ENCODE measurements at regions of chr12 and their contacts with region 1.

Region 1: GRCh38 chr12:50986966-50987737 is 34.8 kb downstream of the HIGD1C start:
- DNase-seq: no peak

Region 2: GRCh38 chr12:50763639-50764285 is 223.4 kb before region 1 on chr12 and contains the start of gene ATF1:
- intact Hi-C with region 1: loop called (anchors 2 kb)
- DNase-seq: peak; percentile 96
- total RNA-seq, gene ATF1: 26.4 TPM

Region 3: DNA sequence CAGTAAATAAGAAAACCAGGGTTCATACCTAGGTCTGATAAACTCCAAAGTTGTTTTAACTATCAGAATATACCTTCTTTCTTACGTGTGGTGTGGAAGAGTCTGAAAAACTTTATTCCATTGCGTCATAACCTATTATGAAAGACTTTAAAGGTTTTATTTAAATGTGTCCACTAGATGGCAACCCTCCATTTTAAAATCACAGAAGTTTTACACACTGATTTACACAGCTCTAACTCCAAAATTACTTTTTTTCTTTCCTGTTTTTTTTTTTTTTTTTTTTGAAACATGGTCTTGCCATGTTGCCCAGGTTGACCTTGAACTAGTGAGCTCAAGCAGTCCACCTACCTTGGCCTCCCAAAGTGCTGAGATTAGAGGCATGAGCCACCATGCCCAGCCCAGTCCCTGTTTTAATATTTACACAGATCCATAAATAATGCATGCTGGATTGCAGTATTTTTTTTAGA is 161.7 kb before region 1 on chr12:
- intact Hi-C with region 1: loop called (anchors 2 kb)
- DNase-seq: no peak

Region 4: DNA sequence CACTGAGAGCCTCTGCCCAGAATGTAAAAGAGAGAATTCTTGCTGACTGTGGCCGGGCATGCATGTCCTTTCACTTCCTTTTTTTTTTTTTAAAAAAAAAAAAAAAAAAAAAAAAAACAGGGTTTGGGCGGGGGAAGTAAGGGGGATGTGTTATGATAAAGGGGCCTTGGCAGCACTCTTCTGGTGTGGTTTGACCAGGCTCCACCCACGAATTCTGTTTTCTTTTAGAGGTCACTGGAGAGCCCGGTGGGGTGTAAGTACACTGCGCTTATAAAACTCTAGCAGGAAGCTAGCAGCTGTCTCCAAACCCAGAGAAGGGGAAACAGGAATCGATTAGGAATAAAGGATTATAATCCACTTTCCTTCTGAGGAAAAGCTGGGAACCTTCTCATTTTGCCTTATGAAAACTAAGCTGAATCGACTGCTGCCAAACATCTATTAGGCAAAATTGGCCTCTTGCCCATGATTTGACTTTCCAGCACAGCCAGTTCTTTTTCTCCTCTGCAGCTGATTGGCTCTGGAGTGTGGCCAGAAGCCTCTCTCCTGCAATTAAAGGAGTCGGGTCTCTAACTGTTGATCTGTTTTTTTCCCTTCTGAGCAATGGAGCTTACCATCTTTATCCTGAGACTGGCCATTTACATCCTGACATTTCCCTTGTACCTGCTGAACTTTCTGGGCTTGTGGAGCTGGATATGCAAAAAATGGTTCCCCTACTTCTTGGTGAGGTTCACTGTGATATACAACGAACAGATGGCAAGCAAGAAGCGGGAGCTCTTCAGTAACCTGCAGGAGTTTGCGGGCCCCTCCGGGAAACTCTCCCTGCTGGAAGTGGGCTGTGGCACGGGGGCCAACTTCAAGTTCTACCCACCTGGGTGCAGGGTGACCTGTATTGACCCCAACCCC is 62.5 kb before region 1 on chr12:
- intact Hi-C with region 1: loop called (anchors 5 kb)
- DNase-seq: peak; percentile 88

Measured in cardiac septum (tissue), 1 donor.